ENCODE measurements at regions of chr1 and their contacts with region 1.

Region 1: DNA sequence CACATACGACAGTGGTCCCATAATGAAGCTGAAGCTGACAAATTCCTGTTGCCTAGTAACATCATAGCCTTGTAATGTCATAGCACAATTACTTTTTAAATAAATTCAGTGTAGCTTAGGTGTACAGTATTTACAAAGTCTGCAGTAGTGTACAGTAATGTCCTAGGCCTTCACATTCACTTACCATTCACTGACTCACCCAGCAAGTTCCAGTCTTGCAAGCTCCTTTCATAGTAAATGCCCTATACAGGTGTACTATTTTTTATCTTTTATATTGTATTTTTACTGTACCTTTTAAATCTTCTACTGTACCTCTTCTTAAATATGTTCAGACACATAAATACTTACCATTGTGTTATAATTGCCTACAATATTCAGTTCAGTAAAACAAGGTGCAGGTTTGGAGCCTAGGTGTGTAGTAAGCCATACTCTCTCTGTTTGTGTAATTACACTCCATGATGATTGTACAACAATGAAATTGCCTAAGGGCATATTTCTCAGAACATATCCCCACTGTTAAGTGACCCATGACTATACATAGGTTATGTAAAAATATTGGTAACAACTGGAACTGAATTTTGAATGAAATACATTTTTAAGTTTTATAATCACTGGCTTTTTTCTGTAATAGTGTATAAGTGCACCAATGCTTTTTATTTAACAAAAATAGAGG is 33.5 kb upstream of the ADAM30 start:
- DNase-seq: peak; percentile 21
- H3K4me3 Mint-ChIP-seq: no peak overlapping the region
- H3K27ac Mint-ChIP-seq: no peak overlapping the region
- H3K4me1 Mint-ChIP-seq: no peaks in the 10 kb centered on the region
- H3K27me3 Mint-ChIP-seq: no peaks in the 10 kb centered on the region
- CTCF ChIP-seq: no peak

Region 2: DNA sequence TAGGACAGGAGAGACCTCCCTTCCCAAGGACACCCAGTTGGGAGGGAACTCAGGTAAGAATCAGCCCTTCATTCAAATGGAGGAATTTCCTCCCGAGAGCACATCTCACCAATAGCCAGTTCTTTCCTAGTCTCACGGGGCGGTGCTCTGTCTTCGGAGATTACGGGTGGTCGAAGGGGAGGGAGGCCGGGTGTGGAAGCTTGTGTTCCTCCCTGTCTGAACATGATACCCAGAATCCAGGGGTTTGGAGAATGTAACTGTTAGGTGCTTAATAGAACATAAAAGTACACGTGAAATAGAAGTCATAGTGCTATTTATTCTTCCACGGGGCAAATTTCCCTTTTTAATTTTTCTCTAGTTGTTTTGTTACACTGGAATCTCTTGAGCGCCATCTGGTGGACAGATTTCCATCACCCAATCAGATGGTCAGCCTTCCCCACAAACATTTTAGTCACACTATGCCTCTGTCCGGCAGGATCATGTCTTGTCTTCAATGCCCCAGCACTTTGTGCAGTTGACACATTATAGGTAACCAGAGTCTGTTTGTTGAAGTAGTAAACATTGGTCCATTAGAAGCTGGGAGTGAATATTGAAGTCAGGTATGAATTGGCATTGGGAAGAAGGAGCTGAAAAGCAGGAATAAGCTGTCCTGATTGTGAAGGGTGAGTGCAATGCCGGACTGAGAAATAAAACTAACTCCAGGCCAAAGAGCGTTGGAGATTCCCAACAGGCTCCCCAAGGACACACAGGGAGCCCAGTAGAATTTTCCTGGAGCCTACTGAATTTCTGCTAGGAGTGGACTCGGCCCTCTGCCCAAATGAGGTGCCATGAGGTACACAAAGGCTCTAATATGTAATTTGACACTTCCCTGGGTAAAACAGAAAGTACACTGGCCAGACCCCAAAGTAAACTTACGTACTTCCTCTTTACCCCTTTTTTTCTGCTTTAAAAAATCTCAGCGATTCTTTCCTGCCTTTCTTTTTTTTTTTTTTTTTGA is 254.1 kb before region 1 on chr1:
- CTCF ChIA-PET with region 1: no interaction called
- POLR2A ChIA-PET with region 1: no interaction called
- intact Hi-C with region 1: no loop called
- DNase-seq: peak; percentile 92
- H3K4me3 Mint-ChIP-seq: peak overlapping the region; percentile 67
- H3K27ac Mint-ChIP-seq: peak overlapping the region; percentile 28
- H3K4me1 Mint-ChIP-seq: peaks cover 21% of the 10 kb centered on the region
- H3K27me3 Mint-ChIP-seq: no peaks in the 10 kb centered on the region
- CTCF ChIP-seq: peak; percentile 77

Region 3: GRCh38 chr1:119968068-119968492 is 38.3 kb after region 1 on chr1:
- CTCF ChIA-PET with region 1: interaction called, 10 read pairs
- POLR2A ChIA-PET with region 1: interaction called, 4 read pairs
- intact Hi-C with region 1: no loop called
- DNase-seq: peak; percentile 67
- H3K4me3 Mint-ChIP-seq: no peak overlapping the region
- H3K27ac Mint-ChIP-seq: peak overlapping the region; percentile 92
- H3K4me1 Mint-ChIP-seq: peaks cover 14% of the 10 kb centered on the region
- H3K27me3 Mint-ChIP-seq: no peaks in the 10 kb centered on the region
- CTCF ChIP-seq: peak; percentile 73